HEK293 (cell line): ENCODE measurements at regions of chrX and their contacts with region 1.

Region 1: GRCh38 chrX:71492231-71493065 is 40.5 kb upstream of the OGT start:
- H3K4me3 ChIP-seq: peak overlapping the region; percentile 12; the same call in 1 of the 2 replicates
- H3K27ac ChIP-seq: no peak overlapping the region
- H3K4me1 ChIP-seq: no peaks in the 10 kb centered on the region
- CTCF ChIP-seq: peak; percentile 30; the same call in 1 of the 2 replicates

Region 2: DNA sequence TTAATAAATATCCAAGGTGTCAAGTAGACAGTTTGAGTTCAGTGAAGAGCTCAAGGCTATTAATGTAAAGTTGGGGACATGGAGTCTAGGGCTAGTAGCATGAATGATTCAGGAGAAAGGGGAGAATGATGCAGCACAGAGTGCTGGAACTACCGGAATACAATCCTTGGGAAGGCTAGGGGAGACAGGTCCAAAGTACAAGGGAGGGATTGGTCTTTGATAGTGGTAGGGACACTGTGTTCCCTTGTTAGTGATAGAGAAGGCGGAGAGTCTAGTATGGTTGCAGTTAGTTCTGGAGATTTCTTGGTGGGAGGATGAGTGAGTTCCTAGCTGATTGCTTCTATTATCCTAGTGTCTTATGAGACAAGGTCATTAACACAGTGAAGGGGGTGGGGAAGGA is 94.5 kb after region 1 on chrX:
- CTCF ChIA-PET with region 1: no interaction called
- POLR2A ChIA-PET with region 1: no interaction called
- H3K4me3 ChIP-seq: no peak overlapping the region
- H3K27ac ChIP-seq: no peak overlapping the region
- H3K4me1 ChIP-seq: no peaks in the 10 kb centered on the region
- CTCF ChIP-seq: no peak

Region 3: GRCh38 chrX:72316408-72317110 is 824.1 kb after region 1 on chrX:
- CTCF ChIA-PET with region 1: no interaction called
- POLR2A ChIA-PET with region 1: interaction called, 10 read pairs
- H3K4me3 ChIP-seq: no peak overlapping the region
- H3K27ac ChIP-seq: no peak overlapping the region
- H3K4me1 ChIP-seq: no peaks in the 10 kb centered on the region
- CTCF ChIP-seq: no peak